Natural killer cell (primary cell): ENCODE measurements at regions of chr19 and their contacts with region 1.

Region 1: DNA sequence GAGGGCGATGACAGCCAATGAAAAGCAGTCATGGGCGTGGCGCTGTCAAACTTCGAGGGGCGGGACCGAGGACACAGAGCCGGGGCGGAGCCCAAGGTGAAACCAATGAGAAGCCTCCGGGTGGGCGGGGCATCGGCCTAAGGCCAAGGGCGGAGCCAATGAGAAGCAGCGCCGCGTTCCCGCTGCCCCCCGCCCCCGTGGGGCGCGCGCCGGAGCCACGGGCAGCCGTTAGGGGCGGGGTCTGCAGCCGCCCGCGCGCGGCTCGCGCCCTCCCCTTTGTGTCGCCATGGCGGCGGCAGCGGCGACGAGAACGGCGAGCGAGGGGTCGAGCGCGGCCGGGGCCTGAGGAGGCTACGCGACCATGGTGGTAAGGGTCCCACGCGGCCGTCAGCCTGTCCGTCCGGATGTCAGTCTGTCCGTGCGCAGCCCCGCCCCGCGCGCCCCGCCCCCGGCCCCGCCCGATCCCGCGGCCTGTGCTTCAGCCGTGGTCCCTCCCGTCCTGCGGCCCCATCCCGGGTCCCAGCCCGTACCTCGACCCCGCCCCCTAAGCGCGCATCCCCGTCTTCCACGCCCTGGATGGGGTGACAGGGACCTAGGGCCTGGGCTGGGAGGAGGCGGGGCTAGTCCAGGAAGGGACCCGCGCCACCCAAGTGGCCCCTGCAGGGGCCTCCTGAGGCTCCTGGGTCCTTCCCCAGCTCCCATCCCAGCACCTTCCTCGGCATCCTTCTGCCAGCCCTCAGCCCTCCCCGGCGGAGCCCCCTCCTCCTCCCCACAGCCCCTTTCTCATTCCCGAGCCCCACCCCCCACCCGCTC is at the start of gene ARHGAP33:
- DNase-seq: peak; percentile 98 to 99
- ATAC-seq: peak; percentile 98 to 100 (median 99)
- H3K4me3 ChIP-seq: peak within 1 kb of the TSS; percentile 58
- H3K4me3 Mint-ChIP-seq: peak within 1 kb of the TSS; percentile 90
- H3K27ac ChIP-seq: no peak within 1 kb of the TSS
- H3K27ac Mint-ChIP-seq: peak within 1 kb of the TSS; percentile 43 to 72
- H3K4me1 ChIP-seq: peaks cover 16% of the 10 kb centered on the region
- H3K4me1 Mint-ChIP-seq: peaks cover 18 to 27% of the 10 kb centered on the region in 2 donors
- H3K27me3 ChIP-seq: no peaks in the 10 kb centered on the region
- H3K27me3 Mint-ChIP-seq: no peaks in the 10 kb centered on the region
- CTCF ChIP-seq: no peak
- total RNA-seq, gene ARHGAP33: 34.4 to 39.3 (median 37.5) TPM

Region 2: DNA sequence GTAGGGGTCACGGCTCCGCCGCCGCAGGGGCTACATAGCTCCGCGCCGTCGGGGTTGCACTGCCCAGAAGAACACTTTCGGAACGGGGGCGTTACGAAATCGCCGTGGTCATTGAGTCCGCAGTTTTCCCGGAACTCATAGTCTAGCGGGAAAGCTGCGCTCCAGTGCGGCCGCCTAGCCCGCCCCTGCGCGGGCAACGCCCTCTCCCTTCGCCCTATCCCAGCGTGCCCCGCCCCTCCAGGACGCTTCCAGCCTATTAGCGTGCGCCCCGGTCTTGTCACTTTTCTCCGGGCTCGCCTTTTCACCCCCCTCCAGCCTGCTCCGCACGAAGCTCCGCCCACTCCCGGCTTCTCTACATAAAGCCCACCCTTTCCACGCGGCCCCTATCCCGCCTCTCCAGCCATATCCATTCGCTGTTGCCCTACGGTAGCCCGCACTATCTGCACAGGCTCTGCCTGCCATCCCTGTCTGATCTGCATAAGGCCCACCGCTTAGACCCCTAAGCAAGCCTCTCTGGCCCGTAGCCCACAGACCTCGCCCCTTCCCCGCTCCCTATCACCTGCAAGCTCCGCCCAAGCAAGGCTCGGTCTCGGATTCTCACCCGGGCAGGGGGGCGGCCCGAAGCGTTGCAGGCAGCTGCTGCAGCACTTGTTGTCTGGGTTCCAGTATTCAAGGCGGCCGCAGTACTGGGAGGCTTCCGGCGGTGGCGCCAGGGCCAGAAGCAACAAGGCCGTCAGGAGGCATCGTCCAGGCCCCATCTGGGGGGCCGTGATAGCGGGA is 34.9 kb before region 1 on chr19:
- intact Hi-C with region 1: loop called (anchors 1 kb)
- DNase-seq: peak; percentile 91 to 97
- ATAC-seq: peak; percentile 66 to 84 (median 69)
- H3K4me3 ChIP-seq: peak overlapping the region; percentile 67
- H3K4me3 Mint-ChIP-seq: peak overlapping the region; percentile 94
- H3K27ac ChIP-seq: peak overlapping the region; percentile 62
- H3K27ac Mint-ChIP-seq: peak overlapping the region; percentile 96 to 99
- H3K4me1 ChIP-seq: peaks cover 51% of the 10 kb centered on the region
- H3K4me1 Mint-ChIP-seq: peaks cover 28 to 54% of the 10 kb centered on the region in 2 donors
- H3K27me3 ChIP-seq: no peaks in the 10 kb centered on the region
- H3K27me3 Mint-ChIP-seq: no peaks in the 10 kb centered on the region
- CTCF ChIP-seq: no peak

Region 3: GRCh38 chr19:35748106-35749020 is 27.1 kb before region 1 on chr19 and contains the start of gene LIN37:
- intact Hi-C with region 1: loop called (anchors 1 kb)
- DNase-seq: peak; percentile 97 to 99
- ATAC-seq: peak; percentile 73 to 90 (median 77)
- H3K4me3 ChIP-seq: peak within 1 kb of the TSS; percentile 91
- H3K4me3 Mint-ChIP-seq: peak within 1 kb of the TSS; percentile 97
- H3K27ac ChIP-seq: peak within 1 kb of the TSS; percentile 84
- H3K27ac Mint-ChIP-seq: peak within 1 kb of the TSS; percentile 92
- H3K4me1 ChIP-seq: peaks cover 46% of the 10 kb centered on the region
- H3K4me1 Mint-ChIP-seq: peaks cover 33 to 47% of the 10 kb centered on the region in 2 donors
- H3K27me3 ChIP-seq: no peaks in the 10 kb centered on the region
- H3K27me3 Mint-ChIP-seq: no peaks in the 10 kb centered on the region
- CTCF ChIP-seq: no peak
- total RNA-seq, gene LIN37: 16.7 to 22.1 (median 18.2) TPM

Region 4: GRCh38 chr19:35757749-35758608 is 17.5 kb before region 1 on chr19 and contains the start of gene PROSER3:
- intact Hi-C with region 1: loop called (anchors 1 kb)
- DNase-seq: peak; percentile 97 to 99
- ATAC-seq: peak; percentile 92 to 99 (median 95)
- H3K4me3 ChIP-seq: peak within 1 kb of the TSS; percentile 84
- H3K4me3 Mint-ChIP-seq: peak within 1 kb of the TSS; percentile 98
- H3K27ac ChIP-seq: peak within 1 kb of the TSS; percentile 87
- H3K27ac Mint-ChIP-seq: peak within 1 kb of the TSS; percentile 93 to 97
- H3K4me1 ChIP-seq: peaks cover 29% of the 10 kb centered on the region
- H3K4me1 Mint-ChIP-seq: peaks cover 29 to 40% of the 10 kb centered on the region in 2 donors
- H3K27me3 ChIP-seq: no peaks in the 10 kb centered on the region
- H3K27me3 Mint-ChIP-seq: peaks cover 0 to 18% of the 10 kb centered on the region in 2 donors
- CTCF ChIP-seq: no peak
- total RNA-seq, gene PROSER3: 33.1 to 40.2 (median 35.9) TPM